Activated T-helper 2 cell treated with anti-CD3 and anti-CD28 coated beads, Interferon-gamma antibody, Interleukin-2, Interleukin-4, amounts not matched to agents 10 μg/mL and 5 μg/mL and 100 μg/mL, durations not matched to agents 14 hours and 24 hours and 36 hours (primary cell): ENCODE measurements at regions of chr9 and their contacts with region 1.

Region 1: GRCh38 chr9:33290247-33291030 is at the start of gene NFX1:
- DNase-seq: peak; percentile 98
- H3K4me3 Mint-ChIP-seq: peak within 1 kb of the TSS; percentile 96
- H3K27ac Mint-ChIP-seq: peak within 1 kb of the TSS; percentile 100
- H3K4me1 Mint-ChIP-seq: peaks cover 45% of the 10 kb centered on the region
- H3K27me3 Mint-ChIP-seq: peaks cover 2% of the 10 kb centered on the region
- total RNA-seq, gene NFX1: 36.9 and 37.2 TPM in 2 replicates

Region 2: GRCh38 chr9:33159760-33160127 is 130.7 kb before region 1 on chr9:
- intact Hi-C with region 1: loop called (anchors 1 kb)
- DNase-seq: peak; percentile 46
- H3K4me3 Mint-ChIP-seq: peak overlapping the region; percentile 76
- H3K27ac Mint-ChIP-seq: peak overlapping the region; percentile 97
- H3K4me1 Mint-ChIP-seq: peaks cover 85% of the 10 kb centered on the region
- H3K27me3 Mint-ChIP-seq: no peaks in the 10 kb centered on the region

Region 3: GRCh38 chr9:33320568-33321261 is 30.3 kb after region 1 on chr9:
- intact Hi-C with region 1: loop called (anchors 1 kb)
- DNase-seq: no peak
- H3K4me3 Mint-ChIP-seq: no peak overlapping the region
- H3K27ac Mint-ChIP-seq: peak overlapping the region; percentile 69
- H3K4me1 Mint-ChIP-seq: peaks cover 11% of the 10 kb centered on the region
- H3K27me3 Mint-ChIP-seq: no peaks in the 10 kb centered on the region

Region 4: GRCh38 chr9:33415501-33416038 is 125.1 kb after region 1 on chr9:
- intact Hi-C with region 1: loop called (anchors 2 kb)
- DNase-seq: peak; percentile 93
- H3K4me3 Mint-ChIP-seq: no peak overlapping the region
- H3K27ac Mint-ChIP-seq: peak overlapping the region; percentile 92
- H3K4me1 Mint-ChIP-seq: peaks cover 34% of the 10 kb centered on the region
- H3K27me3 Mint-ChIP-seq: peaks cover 4% of the 10 kb centered on the region

Region 5: DNA sequence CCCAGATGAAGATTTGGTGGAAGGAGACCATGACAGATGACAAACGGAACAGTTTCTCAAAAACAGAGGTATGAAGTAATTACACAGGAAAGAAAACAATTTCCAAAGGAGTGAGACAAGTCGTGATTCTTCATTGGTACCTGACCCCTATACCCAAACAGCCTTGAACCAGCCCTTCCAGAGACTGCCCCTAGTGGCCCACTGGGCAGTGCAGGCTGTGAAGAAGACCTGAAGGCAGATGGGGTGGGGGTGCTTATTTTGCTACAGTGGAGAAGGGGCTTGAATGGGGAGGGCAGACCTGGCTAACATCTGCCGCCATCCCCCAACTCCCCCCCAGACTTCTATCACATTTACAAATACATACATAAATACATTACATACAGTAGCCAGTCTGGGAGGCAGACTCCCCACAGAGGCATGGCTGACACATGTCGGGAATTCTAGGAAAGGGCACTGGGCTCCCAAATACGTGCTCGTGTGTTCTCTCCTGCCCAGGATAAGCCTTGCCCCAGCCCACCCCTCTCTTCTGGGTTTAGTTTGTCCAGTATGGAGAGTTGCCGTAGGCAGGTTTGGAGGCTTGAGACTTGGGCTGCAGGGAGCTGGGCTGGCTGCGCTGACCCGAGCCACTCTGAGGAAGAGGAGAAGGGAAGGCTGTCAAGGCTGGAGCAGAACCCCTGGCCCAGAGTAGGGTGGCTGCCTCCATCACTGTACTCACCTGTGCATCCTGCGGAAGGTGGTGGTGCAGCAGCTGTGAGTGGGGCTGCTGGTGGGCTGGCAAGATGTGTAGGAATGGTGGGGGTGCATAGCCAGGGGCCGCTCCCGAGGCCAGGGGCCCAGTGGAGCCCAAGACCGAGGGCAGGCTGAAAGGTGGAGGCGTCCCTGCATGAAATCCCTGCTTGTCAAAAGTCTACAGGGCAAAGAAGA is 631.8 kb after region 1 on chr9:
- intact Hi-C with region 1: no loop called
- DNase-seq: no peak
- H3K4me3 Mint-ChIP-seq: no peak overlapping the region
- H3K27ac Mint-ChIP-seq: no peak overlapping the region
- H3K4me1 Mint-ChIP-seq: peaks cover 2% of the 10 kb centered on the region
- H3K27me3 Mint-ChIP-seq: no peaks in the 10 kb centered on the region

Region 6: DNA sequence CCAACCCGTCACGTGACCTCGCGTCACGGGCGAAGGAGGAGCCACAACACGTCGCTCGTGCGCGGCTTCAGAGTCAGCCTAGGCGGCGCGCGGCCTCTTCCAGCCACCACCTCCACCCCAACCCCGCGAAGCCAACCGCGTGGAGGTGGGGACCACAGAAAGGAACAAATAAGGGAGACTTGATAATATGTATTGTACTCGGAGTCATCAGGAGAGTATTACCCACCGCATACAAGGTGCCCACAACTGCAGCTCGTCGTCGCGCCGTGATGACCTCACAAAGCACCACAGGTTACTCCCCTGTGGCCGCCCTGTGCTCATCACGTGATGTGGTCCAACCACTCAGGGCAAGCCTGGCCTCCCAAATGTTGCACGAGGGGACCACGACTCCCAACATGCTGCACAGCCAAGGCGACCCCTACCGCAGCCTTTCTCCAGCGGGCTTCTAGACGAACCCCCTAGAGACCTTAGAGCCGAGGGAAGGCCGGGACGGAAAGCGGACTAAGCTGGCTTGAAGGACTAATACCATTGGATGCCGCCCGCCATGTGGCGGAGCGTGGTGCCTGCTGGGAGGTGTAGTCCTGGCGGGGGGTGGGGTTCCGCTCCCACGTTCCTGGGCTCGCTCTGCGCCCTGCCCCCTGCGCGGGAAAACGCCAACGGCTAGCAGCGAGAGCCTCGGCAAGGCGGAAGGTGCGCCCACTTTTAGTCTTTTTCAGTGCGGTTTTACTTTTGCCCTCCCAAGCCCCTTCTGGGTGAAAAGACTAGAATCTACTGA is 758.7 kb after region 1 on chr9:
- intact Hi-C with region 1: loop called (anchors 2 kb)
- DNase-seq: peak; percentile 96
- H3K4me3 Mint-ChIP-seq: peak overlapping the region; percentile 91
- H3K27ac Mint-ChIP-seq: peak overlapping the region; percentile 98
- H3K4me1 Mint-ChIP-seq: peaks cover 39% of the 10 kb centered on the region
- H3K27me3 Mint-ChIP-seq: no peaks in the 10 kb centered on the region